Mucosa of descending colon (tissue), 3 donors: ENCODE measurements at regions of chr14 and their contacts with region 1.

Region 1: DNA sequence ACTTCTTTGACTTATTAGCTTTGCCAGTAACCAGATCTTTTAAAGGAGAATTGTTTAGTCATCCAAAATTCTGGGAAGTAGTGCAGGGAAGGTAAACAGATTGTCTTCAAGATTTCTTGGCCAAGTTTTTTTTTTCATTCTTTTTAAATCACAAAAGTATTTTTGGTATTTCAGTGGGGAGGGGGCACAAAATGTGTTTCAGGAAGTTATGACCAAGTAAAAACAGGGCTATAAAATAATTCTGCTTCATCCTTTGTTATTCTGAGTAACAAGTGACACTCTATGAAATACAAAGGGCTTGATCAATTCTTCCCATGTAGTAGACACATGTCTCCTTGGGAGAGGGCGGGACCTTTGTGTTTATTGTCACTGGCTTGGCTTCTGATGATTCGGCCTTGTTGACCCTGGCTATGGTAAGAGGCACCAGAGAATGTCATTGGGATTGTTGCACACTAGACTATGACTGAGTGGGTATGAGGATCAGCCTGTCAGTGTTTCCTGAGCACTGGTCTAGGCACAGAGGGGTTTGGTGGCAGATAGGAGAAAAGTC is 55.4 kb downstream of the SUSD6 start:
- DNase-seq: no peak
- ATAC-seq: peak; percentile 20
- H3K4me3 ChIP-seq: no peak overlapping the region
- H3K4me1 ChIP-seq: peaks cover 16% of the 10 kb centered on the region
- CTCF ChIP-seq: no peak

Region 2: DNA sequence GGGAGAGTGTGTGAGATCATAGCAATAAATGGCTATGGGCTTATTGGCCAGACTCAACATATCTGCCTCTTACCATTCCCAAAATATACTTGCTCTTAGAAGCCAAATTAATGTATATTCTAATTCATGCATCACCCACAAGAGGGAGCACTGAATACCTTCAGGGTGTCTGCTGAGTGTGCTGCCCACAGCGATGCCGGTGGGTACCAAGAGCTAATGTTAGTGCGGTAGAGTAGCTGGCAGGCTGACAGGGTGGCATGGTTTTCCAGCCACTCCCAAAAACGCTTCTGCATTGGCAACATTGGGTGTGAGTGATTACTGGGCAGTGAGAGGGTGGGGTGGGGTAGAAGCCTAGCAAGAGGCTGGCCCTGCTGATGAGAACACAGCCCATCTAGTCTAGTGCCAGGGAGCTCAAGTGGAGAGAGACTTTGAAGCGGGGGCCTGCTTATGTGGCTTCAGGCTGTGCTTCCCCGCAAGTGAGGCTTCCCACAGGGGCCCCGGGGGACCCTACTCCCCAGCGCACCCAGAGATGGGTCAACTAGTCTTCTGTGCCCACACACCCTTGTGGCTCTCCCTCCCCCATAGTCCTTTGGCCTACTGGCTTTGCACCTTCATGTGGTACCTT is 191.5 kb before region 1 on chr14:
- intact Hi-C with region 1: no loop called
- DNase-seq: no peak
- ATAC-seq: peak; percentile 31
- H3K4me3 ChIP-seq: no peak overlapping the region
- H3K4me1 ChIP-seq: no peaks in the 10 kb centered on the region
- CTCF ChIP-seq: no peak

Region 3: GRCh38 chr14:69611201-69612011 is 55.4 kb before region 1 on chr14 and contains the start of gene SUSD6:
- intact Hi-C with region 1: loop called in 1 of 2 experiments (anchors 10 kb)
- DNase-seq: peak; percentile 91 to 95 (median 95)
- ATAC-seq: peak; percentile 82
- H3K4me3 ChIP-seq: peak within 1 kb of the TSS; percentile 74
- H3K4me1 ChIP-seq: peaks cover 56% of the 10 kb centered on the region
- CTCF ChIP-seq: no peak
- total RNA-seq, gene SUSD6: 56.3 to 98.3 (median 95.6) TPM

Region 4: DNA sequence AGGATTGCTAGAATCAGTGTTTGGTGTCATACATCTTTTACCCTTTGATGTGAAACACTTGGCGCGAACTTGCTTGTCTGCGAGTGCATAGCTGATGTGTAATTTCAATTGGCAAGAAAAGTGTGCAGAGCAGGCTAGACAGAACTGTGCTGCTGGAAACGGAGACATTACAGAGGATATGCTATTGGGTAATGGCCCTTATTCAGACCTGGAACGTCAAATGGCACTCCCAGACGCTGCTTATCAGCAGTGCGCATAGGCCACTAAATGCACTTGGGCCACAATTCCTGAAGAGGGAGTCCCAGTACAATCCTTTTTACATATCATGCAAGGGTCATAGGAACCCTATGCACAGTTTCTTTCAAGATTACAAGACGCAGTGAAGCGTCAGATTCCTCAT is 145.9 kb after region 1 on chr14:
- intact Hi-C with region 1: no loop called
- DNase-seq: no peak
- ATAC-seq: no peak
- H3K4me3 ChIP-seq: no peak overlapping the region
- H3K4me1 ChIP-seq: peaks cover 3% of the 10 kb centered on the region
- CTCF ChIP-seq: no peak